ENCODE measurements at regions of chr2 and their contacts with region 1.

Region 1: DNA sequence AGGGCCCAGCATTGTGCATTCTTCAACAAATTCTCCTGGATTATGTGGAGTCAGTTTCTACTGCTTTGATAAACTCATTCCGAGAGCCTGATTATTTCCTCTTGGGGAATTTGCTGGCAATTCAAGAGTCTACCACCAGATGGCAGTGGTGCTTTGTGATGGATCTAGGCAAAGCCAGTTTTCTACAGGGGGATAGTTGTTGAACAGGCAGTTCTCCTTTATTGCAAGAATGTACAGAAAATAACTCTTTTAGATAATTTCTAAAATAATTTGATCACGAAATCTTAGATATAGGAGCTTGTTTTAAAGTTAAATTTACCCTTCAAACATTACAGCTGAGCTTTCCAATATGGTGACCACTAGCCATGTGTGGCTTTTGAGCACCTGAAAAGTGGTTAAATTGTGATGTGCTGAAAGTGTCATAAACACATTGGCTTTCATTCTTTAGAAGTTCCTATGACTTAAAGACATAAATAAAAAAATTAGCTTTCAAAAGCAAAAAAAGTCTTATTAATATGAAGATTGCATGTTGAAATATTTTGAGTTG is 66.7 kb upstream of the HAAO start:
- DNase-seq: peak; percentile 63
- H3K4me3 ChIP-seq: no peak overlapping the region
- H3K27ac ChIP-seq: no peak overlapping the region
- H3K4me1 ChIP-seq: peaks cover 35% of the 10 kb centered on the region
- H3K27me3 ChIP-seq: no peaks in the 10 kb centered on the region
- CTCF ChIP-seq: peak; percentile 93 to 95

Region 2: GRCh38 chr2:42895134-42895790 is 36.2 kb after region 1 on chr2:
- CTCF ChIA-PET with region 1: no interaction called
- dilution Hi-C with region 1: loop called (anchors 5 kb)
- in situ Hi-C with region 1: no loop called
- intact Hi-C with region 1: no loop called
- DNase-seq: no peak
- H3K4me3 ChIP-seq: no peak overlapping the region
- H3K27ac ChIP-seq: no peak overlapping the region
- H3K4me1 ChIP-seq: peaks cover 6% of the 10 kb centered on the region
- H3K27me3 ChIP-seq: no peaks in the 10 kb centered on the region
- CTCF ChIP-seq: no peak

Region 3: DNA sequence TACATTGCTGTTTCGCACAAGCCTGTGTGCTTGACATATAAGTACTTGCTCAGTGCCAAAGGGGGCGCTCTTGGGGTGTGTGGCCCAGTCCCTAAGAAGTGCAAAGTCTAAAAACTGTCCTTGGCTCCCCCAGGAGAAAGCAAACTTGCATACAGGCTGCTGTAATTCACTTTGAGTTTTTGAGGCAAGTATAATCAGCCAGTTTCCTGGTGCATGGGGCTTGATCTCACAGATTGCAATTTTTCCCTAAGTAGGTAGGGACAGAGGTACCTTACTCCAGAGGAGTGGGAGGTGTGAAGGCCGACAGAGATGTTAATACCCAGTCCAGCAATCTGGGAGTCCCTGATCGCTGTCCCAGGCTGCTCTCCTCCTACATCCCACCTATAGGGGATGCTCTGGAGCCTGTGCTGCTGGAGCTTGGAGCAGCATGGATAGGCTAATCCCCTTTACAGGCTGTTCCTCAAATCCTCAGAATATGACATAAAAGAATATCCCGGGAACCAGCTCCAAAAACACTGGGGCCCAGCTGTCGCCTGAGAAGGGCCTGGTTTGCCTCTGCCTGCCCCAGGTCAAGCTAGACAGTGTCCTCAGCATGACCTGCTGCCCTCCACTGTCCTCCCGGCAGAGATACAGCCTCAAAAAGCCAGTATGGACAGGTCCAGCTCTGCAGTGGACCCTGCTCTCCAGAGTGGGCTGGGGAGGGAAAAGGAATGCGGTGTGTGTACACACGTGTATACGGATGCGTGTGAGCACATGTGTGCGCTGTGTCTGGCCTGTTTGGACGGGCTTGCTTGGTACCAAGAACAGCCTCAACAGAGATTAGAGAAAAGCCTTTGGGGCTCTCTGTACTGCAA is 69.8 kb after region 1 on chr2:
- CTCF ChIA-PET with region 1: no interaction called
- dilution Hi-C with region 1: no loop called
- in situ Hi-C with region 1: loop called in 1 of 2 experiments (anchors 10 kb)
- intact Hi-C with region 1: no loop called
- DNase-seq: no peak
- H3K4me3 ChIP-seq: no peak overlapping the region
- H3K27ac ChIP-seq: no peak overlapping the region
- H3K4me1 ChIP-seq: peaks cover 37% of the 10 kb centered on the region
- H3K27me3 ChIP-seq: no peaks in the 10 kb centered on the region
- CTCF ChIP-seq: peak in 1 of 2 donors; percentile 47

Region 4: GRCh38 chr2:42935692-42936681 is 76.9 kb after region 1 on chr2:
- CTCF ChIA-PET with region 1: no interaction called
- dilution Hi-C with region 1: loop called (anchors 5 kb)
- in situ Hi-C with region 1: loop called in 1 of 2 experiments (anchors 10 kb)
- intact Hi-C with region 1: loop called (anchors 2 kb)
- DNase-seq: no peak
- H3K4me3 ChIP-seq: no peak overlapping the region
- H3K27ac ChIP-seq: no peak overlapping the region
- H3K4me1 ChIP-seq: peaks cover 45% of the 10 kb centered on the region
- H3K27me3 ChIP-seq: no peaks in the 10 kb centered on the region
- CTCF ChIP-seq: no peak

Region 5: GRCh38 chr2:43226558-43226954 is 367.5 kb after region 1 on chr2 and contains the start of gene ZFP36L2:
- CTCF ChIA-PET with region 1: no interaction called
- dilution Hi-C with region 1: no loop called
- in situ Hi-C with region 1: loop called (anchors 10 kb)
- intact Hi-C with region 1: loop called (anchors 1 kb)
- DNase-seq: peak; percentile 95
- H3K4me3 ChIP-seq: peak within 1 kb of the TSS; percentile 83 to 88 (median 86)
- H3K27ac ChIP-seq: peak within 1 kb of the TSS; percentile 88
- H3K4me1 ChIP-seq: peaks cover 29% of the 10 kb centered on the region
- H3K27me3 ChIP-seq: no peaks in the 10 kb centered on the region
- CTCF ChIP-seq: no peak
- total RNA-seq, gene ZFP36L2: 26.3 to 213 TPM

Region 6: DNA sequence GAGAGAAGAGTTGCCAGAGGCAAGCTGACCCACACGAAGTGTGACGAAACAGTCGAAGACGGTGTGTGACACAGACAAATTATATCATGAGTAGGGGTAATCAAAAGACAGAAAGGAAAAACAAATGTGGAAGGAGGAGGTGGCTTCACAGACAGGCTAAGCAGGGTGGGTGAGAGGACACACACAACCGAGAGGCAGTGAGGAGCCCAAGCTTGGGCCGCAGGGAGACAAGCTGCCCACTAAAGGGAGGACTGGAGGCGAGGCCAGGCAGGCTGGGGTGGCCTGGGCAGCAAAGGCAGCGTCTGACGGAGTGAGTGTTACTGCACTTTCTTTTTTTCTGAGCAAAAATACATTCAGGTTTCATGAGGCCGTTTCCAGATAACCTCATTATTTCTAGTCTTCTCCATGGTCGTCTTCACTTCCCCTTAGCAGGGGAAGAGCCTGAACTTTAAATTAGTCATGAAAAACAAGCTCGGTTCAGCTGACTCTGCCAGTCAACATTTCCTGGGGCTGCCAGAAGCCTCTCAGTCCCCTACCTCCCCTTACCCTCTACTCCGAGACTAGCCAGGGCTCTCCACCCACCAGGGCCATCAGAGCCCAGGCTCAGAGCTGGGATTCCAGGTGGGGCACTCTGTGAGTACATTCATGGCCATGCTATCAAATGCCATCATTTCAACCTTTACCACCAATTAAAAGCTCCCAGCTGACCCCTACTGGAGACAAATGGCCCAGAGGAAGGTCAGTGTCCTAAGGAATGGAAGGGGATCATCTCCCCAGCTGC is 381.1 kb after region 1 on chr2:
- CTCF ChIA-PET with region 1: no interaction called
- dilution Hi-C with region 1: no loop called
- in situ Hi-C with region 1: loop called in 1 of 2 experiments (anchors 10 kb)
- intact Hi-C with region 1: no loop called
- DNase-seq: no peak
- H3K4me3 ChIP-seq: no peak overlapping the region
- H3K27ac ChIP-seq: no peak overlapping the region
- H3K4me1 ChIP-seq: no peaks in the 10 kb centered on the region
- H3K27me3 ChIP-seq: no peaks in the 10 kb centered on the region
- CTCF ChIP-seq: peak in 1 of 2 donors; percentile 18

Region 7: DNA sequence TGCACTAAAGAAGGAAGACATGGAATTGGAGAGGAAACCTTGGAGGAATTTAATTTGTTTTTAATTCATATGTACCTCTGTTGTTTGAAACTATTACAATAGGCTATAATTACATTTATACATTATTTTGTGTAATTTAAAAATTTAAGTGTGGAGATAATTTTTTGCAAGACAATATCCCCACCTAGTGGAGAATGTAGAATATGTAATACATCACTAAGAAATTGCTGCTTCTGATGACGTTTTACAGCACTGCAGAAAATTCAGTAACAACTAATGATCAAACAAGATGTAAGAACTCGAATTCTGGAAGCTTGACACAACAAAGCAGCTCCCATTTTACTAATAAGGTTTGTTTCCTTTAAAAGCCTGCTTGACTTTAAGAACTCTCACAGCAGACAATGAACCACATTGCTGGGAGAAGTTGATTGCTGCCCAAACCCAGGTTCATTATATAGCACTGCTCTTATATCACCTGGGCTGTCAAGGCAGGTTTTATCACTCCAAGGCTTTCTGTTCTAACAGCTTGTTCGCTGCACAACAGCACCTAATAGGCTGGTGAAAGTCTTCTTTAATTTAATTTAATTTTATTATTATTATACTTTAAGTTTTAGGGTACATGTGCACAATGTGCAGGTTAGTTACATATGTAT is 683.3 kb after region 1 on chr2:
- CTCF ChIA-PET with region 1: no interaction called
- dilution Hi-C with region 1: no loop called
- in situ Hi-C with region 1: no loop called
- intact Hi-C with region 1: loop called (anchors 10 kb)
- DNase-seq: peak; percentile 23
- H3K4me3 ChIP-seq: no peak overlapping the region
- H3K27ac ChIP-seq: no peak overlapping the region
- H3K4me1 ChIP-seq: peaks cover 30% of the 10 kb centered on the region
- H3K27me3 ChIP-seq: no peaks in the 10 kb centered on the region
- CTCF ChIP-seq: peak; percentile 40

Measured in mammary epithelial cell (primary cell).